Dorsolateral prefrontal cortex (tissue), 120 donors: ENCODE measurements at regions of chr3 and their contacts with region 1.

Region 1: DNA sequence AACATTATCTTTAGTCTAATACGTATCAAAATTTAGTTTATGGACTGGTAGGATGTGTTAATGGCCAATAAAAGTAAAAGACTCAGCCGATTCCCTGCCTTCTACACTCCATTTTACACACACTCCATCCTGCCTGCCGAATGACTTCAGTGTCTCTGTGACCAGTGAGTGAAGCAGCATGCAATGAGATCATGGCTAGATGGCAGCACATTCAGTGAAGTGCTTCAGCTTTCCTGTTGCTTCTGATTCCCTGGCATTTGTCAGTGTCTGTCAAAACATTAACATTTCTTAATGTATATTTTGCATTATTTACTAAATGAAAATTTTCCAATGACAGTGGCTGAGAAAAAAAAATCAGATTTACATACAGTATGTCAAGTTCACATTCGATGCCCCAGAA is 412.0 kb downstream of the FHIT start:
- DNase-seq: peak in 5 of 10 donors; percentile 8 to 53 (median 45)
- H3K4me3 ChIP-seq: peak overlapping the region in 1 of 59 donors; percentile 7
- H3K27ac ChIP-seq: no peak overlapping the region
- H3K27me3 ChIP-seq: no peaks in the 10 kb centered on the region
- CTCF ChIP-seq: peak in 50 of 56 donors; percentile 14 to 62 (median 38)

Region 2: GRCh38 chr3:61381745-61382392 is 542.6 kb after region 1 on chr3:
- intact Hi-C with region 1: loop called in 1 of 2 experiments (anchors 10 kb)
- DNase-seq: no peak
- H3K4me3 ChIP-seq: no peak overlapping the region
- H3K27ac ChIP-seq: no peak overlapping the region
- H3K27me3 ChIP-seq: no peaks in the 10 kb centered on the region
- CTCF ChIP-seq: peak; percentile 29 to 87 (median 68)